ENCODE measurements at regions of chr2 and their contacts with region 1.

Region 1: GRCh38 chr2:85269959-85270358 is 57.8 kb downstream of the TGOLN2 start:
- DNase-seq: no peak
- H3K4me3 Mint-ChIP-seq: no peak overlapping the region
- H3K27ac Mint-ChIP-seq: no peak overlapping the region
- H3K4me1 Mint-ChIP-seq: no peaks in the 10 kb centered on the region
- H3K27me3 Mint-ChIP-seq: peaks cover 15% of the 10 kb centered on the region

Region 2: DNA sequence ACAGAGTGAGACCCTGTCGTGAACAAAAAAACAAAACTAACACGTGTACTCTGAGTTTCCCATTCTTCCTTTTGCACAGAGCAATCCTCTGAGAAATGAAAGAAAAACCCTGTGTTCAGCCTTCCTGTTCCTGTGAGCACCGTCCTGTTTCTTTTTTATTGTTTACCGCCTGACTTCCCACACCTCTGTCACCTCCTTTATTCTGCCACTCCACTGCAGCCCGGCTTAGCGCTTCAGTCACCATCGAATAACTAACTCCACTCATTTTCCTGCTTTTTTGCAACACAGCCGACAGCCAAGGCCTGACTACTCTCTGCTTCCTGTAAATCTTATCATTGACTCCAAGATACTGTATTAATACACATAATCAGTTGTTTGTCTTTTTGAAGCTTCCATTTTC is 17.0 kb after region 1 on chr2:
- CTCF ChIA-PET with region 1: interaction called, 12 read pairs
- POLR2A ChIA-PET with region 1: no interaction called
- DNase-seq: no peak
- H3K4me3 Mint-ChIP-seq: peak overlapping the region; percentile 48
- H3K27ac Mint-ChIP-seq: peak overlapping the region; percentile 87
- H3K4me1 Mint-ChIP-seq: peaks cover 36% of the 10 kb centered on the region
- H3K27me3 Mint-ChIP-seq: no peaks in the 10 kb centered on the region

Measured in activated CD4-positive, alpha-beta T cell treated with anti-CD3 and anti-CD28 coated beads, Interleukin-2, amount 10 ng/mL, durations not matched to agents 7 days and 5 days (primary cell).